Endothelial cell of umbilical vein (primary cell): ENCODE measurements at regions of chr2 and their contacts with region 1.

Region 1: GRCh38 chr2:69163109-69163508 is 150.1 kb downstream of the ANTXR1 start:
- DNase-seq: peak; percentile 68
- H3K4me3 ChIP-seq: no peak overlapping the region
- H3K27ac ChIP-seq: peak overlapping the region; percentile 95
- H3K4me1 ChIP-seq: peaks cover 40% of the 10 kb centered on the region
- H3K27me3 ChIP-seq: no peaks in the 10 kb centered on the region
- CTCF ChIP-seq: no peak
- POLR2A ChIP-seq: no peak

Region 2: GRCh38 chr2:68411397-68412126 is 751.5 kb before region 1 on chr2:
- CTCF ChIA-PET with region 1: no interaction called
- POLR2A ChIA-PET with region 1: no interaction called
- dilution Hi-C with region 1: no loop called
- intact Hi-C with region 1: no loop called
- DNase-seq: no peak
- H3K4me3 ChIP-seq: no peak overlapping the region
- H3K27ac ChIP-seq: no peak overlapping the region
- H3K4me1 ChIP-seq: no peaks in the 10 kb centered on the region
- H3K27me3 ChIP-seq: no peaks in the 10 kb centered on the region
- CTCF ChIP-seq: no peak
- POLR2A ChIP-seq: no peak

Region 3: DNA sequence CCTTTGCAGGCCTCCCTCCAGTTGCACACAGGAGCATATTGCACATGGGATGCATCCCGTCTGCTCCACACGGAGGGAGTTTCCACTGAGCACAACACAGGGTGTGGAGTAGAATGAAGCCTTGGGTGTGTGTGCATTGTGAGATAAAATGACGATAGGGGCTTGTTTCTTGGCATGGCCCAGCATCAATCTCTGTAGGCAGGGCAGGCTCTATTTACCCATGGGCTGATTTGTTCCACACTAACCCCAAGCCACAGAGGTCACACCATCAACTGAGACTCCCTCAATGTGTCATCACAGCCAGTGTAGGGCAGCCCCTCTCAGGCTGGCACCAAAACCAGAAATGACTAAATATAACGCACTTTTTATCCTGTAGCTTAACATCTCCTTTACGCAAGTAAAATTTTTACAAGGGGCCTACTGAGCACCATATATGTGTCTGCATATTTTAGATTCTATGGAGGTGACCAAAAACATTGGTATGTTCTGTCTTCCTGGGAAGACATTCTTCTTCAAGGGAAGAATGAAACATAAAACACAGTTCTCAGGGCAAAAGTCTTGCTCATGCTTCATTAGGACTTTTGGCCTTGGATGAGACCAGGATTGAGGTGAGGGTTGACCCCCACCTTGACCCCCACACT is 191.4 kb before region 1 on chr2:
- CTCF ChIA-PET with region 1: no interaction called
- POLR2A ChIA-PET with region 1: no interaction called
- dilution Hi-C with region 1: no loop called
- intact Hi-C with region 1: no loop called
- DNase-seq: no peak
- H3K4me3 ChIP-seq: no peak overlapping the region
- H3K27ac ChIP-seq: no peak overlapping the region
- H3K4me1 ChIP-seq: no peaks in the 10 kb centered on the region
- H3K27me3 ChIP-seq: peaks cover 17 to 20% of the 10 kb centered on the region in 2 experiments
- CTCF ChIP-seq: no peak
- POLR2A ChIP-seq: no peak

Region 4: DNA sequence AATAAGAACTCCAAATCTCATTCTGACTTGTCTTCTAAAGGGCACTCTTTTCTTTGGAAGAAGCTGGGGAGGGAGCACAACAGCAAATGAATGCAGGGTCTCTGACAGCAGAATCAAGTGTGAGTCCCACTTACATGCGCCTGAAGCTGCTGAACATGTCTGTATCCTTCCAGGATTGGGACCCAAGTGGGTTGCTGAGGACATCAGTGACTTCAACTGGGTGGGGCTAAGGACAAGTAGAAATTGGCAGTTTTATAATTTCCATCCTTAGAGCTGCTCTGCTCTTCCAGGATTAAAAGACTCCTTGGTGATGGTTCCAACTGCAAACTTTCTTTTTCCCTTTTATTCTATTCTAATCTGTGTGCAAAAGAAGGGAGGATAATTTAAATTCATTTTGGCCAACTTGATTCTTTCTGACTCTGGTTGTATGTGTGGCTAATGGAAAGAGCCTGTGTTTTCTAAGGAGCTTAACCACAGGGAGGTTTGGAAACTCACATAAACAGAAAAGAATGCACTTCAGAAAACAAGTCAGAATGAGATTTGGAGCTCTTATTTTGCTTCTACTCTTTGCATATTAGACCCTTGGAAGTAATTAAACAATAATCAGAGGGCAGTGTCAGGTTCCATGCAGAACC is 129.5 kb before region 1 on chr2:
- CTCF ChIA-PET with region 1: no interaction called
- POLR2A ChIA-PET with region 1: no interaction called
- dilution Hi-C with region 1: no loop called
- intact Hi-C with region 1: loop called (anchors 1 kb)
- DNase-seq: no peak
- H3K4me3 ChIP-seq: no peak overlapping the region
- H3K27ac ChIP-seq: no peak overlapping the region
- H3K4me1 ChIP-seq: peaks cover 16% of the 10 kb centered on the region
- H3K27me3 ChIP-seq: no peaks in the 10 kb centered on the region
- CTCF ChIP-seq: no peak
- POLR2A ChIP-seq: no peak

Region 5: GRCh38 chr2:69122271-69122670 is 40.8 kb before region 1 on chr2:
- CTCF ChIA-PET with region 1: interaction called, 3 read pairs
- POLR2A ChIA-PET with region 1: interaction called, 3 read pairs
- dilution Hi-C with region 1: no loop called
- intact Hi-C with region 1: loop called (anchors 2 kb)
- DNase-seq: peak; percentile 84
- H3K4me3 ChIP-seq: no peak overlapping the region
- H3K27ac ChIP-seq: peak overlapping the region; percentile 55
- H3K4me1 ChIP-seq: peaks cover 26% of the 10 kb centered on the region
- H3K27me3 ChIP-seq: no peaks in the 10 kb centered on the region
- CTCF ChIP-seq: no peak
- POLR2A ChIP-seq: no peak

Region 6: DNA sequence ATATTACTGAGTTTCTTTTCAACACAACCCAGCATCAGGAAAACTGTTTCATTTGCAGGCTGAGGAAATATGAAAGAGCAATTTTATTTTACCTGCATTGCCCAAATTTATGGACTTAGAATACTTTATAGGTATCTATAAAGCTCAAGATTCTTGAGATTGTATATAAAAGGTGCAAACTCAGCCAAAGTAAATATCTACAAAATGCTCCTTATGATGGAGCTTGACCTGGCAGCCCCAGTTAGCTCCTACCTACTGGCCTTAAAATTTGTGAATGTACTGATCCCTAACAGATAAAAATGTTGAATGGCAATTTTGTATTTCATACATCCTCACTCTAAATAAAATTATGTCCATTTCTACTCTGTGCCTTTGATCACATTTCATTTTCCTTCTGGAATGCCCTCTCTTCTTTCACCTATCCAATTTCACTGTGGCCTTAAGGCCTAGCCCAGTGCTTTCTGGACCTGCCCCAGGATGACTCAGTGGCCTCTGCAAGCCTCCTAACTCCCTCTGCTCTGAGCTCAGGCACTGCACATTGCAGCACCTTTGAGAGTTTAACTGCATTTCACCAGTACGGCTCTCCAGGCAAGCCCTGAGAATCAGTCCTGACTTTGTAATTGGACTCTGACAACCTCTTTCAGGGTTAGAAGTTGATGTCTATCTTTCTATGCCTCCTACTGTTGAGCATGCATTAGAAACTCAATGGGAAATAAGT is 24.2 kb before region 1 on chr2:
- CTCF ChIA-PET with region 1: interaction called, 6 read pairs
- POLR2A ChIA-PET with region 1: no interaction called
- dilution Hi-C with region 1: no loop called
- intact Hi-C with region 1: loop called (anchors 2 kb)
- DNase-seq: no peak
- H3K4me3 ChIP-seq: no peak overlapping the region
- H3K27ac ChIP-seq: peak overlapping the region; percentile 18
- H3K4me1 ChIP-seq: peaks cover 17% of the 10 kb centered on the region
- H3K27me3 ChIP-seq: no peaks in the 10 kb centered on the region
- CTCF ChIP-seq: no peak
- POLR2A ChIP-seq: no peak

Region 7: DNA sequence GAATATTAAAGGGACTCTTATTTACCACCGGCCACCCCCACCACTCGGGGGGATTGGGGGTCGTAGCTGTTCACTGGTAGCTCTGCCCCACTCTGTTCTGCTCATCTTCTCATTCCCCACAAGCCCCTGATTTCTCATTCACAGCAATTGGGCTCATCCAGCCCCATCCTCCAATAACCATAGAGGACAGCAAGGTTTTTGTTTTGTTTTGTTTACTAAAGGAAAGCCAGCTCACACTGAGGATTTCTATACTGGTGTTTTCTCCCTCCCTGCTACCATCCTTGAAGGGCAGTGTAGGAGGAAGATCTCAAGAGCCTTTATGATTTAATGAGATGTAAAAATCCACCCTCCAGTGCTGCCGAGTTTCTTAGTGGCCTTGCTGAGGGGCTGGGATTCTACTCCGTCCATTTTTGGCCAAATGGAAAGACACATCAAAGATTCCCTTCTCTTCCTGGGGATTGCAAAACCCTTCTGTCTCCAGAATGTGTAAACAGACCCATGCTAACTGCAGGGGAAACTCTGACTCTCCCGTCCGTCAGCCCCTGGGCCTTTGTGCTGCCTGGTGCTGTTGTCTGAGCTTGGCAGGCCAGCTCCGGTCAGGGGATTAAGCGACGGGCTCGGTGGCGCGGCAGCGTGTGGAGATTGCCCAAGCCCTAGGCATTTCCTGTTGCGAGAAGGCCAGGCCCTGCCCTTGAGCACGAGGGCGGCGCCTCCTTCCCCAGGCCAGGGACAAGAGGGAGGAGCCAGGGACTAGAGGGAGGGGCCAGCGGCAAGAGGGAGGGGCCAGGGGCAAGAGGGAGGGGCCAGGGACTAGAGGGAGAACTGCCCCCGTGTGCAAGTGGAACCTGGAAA is 14.9 kb after region 1 on chr2:
- CTCF ChIA-PET with region 1: interaction called, 16 read pairs
- POLR2A ChIA-PET with region 1: interaction called, 3 read pairs
- dilution Hi-C with region 1: no loop called
- intact Hi-C with region 1: loop called (anchors 1 kb)
- DNase-seq: peak; percentile 74
- H3K4me3 ChIP-seq: peak overlapping the region in 1 of 3 experiments; percentile 0
- H3K27ac ChIP-seq: peak overlapping the region; percentile 91
- H3K4me1 ChIP-seq: peaks cover 14% of the 10 kb centered on the region
- H3K27me3 ChIP-seq: no peaks in the 10 kb centered on the region
- CTCF ChIP-seq: no peak
- POLR2A ChIP-seq: no peak